ENCODE measurements at regions of chr12 and their contacts with region 1.

Region 1: GRCh38 chr12:51195841-51196240 is 22.0 kb downstream of the POU6F1 start:
- DNase-seq: no peak
- ATAC-seq: no peak
- H3K4me3 ChIP-seq: no peak overlapping the region
- H3K27ac ChIP-seq: no peak overlapping the region
- H3K4me1 ChIP-seq: no peaks in the 10 kb centered on the region
- H3K27me3 ChIP-seq: no peaks in the 10 kb centered on the region
- CTCF ChIP-seq: no peak

Region 2: DNA sequence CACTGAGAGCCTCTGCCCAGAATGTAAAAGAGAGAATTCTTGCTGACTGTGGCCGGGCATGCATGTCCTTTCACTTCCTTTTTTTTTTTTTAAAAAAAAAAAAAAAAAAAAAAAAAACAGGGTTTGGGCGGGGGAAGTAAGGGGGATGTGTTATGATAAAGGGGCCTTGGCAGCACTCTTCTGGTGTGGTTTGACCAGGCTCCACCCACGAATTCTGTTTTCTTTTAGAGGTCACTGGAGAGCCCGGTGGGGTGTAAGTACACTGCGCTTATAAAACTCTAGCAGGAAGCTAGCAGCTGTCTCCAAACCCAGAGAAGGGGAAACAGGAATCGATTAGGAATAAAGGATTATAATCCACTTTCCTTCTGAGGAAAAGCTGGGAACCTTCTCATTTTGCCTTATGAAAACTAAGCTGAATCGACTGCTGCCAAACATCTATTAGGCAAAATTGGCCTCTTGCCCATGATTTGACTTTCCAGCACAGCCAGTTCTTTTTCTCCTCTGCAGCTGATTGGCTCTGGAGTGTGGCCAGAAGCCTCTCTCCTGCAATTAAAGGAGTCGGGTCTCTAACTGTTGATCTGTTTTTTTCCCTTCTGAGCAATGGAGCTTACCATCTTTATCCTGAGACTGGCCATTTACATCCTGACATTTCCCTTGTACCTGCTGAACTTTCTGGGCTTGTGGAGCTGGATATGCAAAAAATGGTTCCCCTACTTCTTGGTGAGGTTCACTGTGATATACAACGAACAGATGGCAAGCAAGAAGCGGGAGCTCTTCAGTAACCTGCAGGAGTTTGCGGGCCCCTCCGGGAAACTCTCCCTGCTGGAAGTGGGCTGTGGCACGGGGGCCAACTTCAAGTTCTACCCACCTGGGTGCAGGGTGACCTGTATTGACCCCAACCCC is 271.2 kb before region 1 on chr12:
- CTCF ChIA-PET with region 1: interaction called, 15 read pairs
- POLR2A ChIA-PET with region 1: no interaction called
- in situ Hi-C with region 1: no loop called
- intact Hi-C with region 1: no loop called
- DNase-seq: no peak
- ATAC-seq: no peak
- H3K4me3 ChIP-seq: peak overlapping the region in 1 of 2 experiments; percentile 26; a peak in 1 of 4 replicates
- H3K27ac ChIP-seq: no peak overlapping the region
- H3K4me1 ChIP-seq: no peaks in the 10 kb centered on the region
- H3K27me3 ChIP-seq: no peaks in the 10 kb centered on the region
- CTCF ChIP-seq: no peak

Measured in Panc1 (cell line).